ENCODE measurements at regions of chr2 and their contacts with region 1.

Region 1: GRCh38 chr2:219597552-219598307 is at the start of gene STK11IP:
- DNase-seq: peak; percentile 86 to 99
- H3K4me3 ChIP-seq: peak within 1 kb of the TSS; percentile 70 to 73
- H3K27ac ChIP-seq: peak within 1 kb of the TSS; percentile 88
- H3K4me1 ChIP-seq: peaks cover 0 to 9% of the 10 kb centered on the region in 2 donors
- H3K27me3 ChIP-seq: no peaks in the 10 kb centered on the region
- CTCF ChIP-seq: no peak
- total RNA-seq, gene STK11IP: 138 TPM

Region 2: DNA sequence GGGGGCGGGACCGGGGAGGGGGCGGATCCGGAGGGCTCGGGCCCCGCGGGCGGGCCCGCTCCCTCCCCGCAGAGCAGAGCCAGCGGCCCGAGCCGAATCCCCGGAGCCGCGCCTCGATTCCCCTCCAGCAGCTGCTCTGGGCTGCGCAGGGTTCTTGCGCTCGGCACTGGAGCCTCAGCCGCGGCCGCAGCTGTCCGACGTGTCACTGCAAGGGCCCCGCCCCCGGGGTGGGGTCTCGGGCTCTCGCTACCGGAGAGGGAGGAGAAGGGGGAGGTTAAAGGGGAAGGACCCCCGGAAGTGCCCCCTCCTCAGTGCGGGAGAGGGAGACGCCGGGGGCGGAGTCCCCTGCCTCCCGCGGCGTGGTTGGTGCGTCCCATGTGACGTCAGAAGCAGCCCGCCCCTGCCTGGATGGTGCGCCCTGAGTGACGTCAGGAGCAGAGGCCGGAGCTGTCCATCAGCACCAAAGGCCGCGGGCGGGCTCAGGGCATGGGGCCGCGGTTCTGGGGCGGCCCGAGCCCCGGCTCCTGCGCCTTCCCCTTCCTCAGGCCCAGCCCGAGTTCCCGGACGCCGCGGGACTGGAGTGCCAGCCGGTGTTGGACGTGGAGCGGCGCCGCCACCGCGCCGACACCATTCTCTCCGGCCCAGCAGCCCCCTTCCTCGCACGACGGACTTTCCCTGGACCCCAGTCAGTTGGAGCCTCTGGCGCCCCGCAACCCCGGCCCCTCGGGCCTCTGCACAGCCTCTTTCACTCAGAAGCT is 54.0 kb before region 1 on chr2 and contains the starts of genes CHPF and TMEM198:
- intact Hi-C with region 1: loop called (anchors 2 kb)
- DNase-seq: peak; percentile 96 to 99
- H3K4me3 ChIP-seq: peak within 1 kb of the TSS; percentile 87 to 90
- H3K27ac ChIP-seq: peak within 1 kb of the TSS; percentile 92 to 95
- H3K4me1 ChIP-seq: peaks cover 8 to 24% of the 10 kb centered on the region in 2 donors
- H3K27me3 ChIP-seq: no peaks in the 10 kb centered on the region
- CTCF ChIP-seq: no peak
- total RNA-seq, gene CHPF: 249 TPM
- total RNA-seq, gene TMEM198: 6.0 TPM

Region 3: GRCh38 chr2:219552382-219553167 is 45.2 kb before region 1 on chr2:
- intact Hi-C with region 1: loop called (anchors 1 kb)
- DNase-seq: peak in 1 of 2 donors; percentile 92
- H3K4me3 ChIP-seq: peak overlapping the region; percentile 61 to 79
- H3K27ac ChIP-seq: peak overlapping the region; percentile 40 to 77
- H3K4me1 ChIP-seq: peaks cover 6 to 19% of the 10 kb centered on the region in 2 donors
- H3K27me3 ChIP-seq: no peaks in the 10 kb centered on the region
- CTCF ChIP-seq: no peak

Region 4: GRCh38 chr2:219571311-219572236 is 26.2 kb before region 1 on chr2 and contains the start of gene OBSL1:
- intact Hi-C with region 1: loop called (anchors 1 kb)
- DNase-seq: peak in 1 of 2 donors; percentile 81
- H3K4me3 ChIP-seq: peak within 1 kb of the TSS; percentile 93 to 94
- H3K27ac ChIP-seq: peak within 1 kb of the TSS; percentile 89 to 90
- H3K4me1 ChIP-seq: peaks cover 0 to 12% of the 10 kb centered on the region in 2 donors
- H3K27me3 ChIP-seq: no peaks in the 10 kb centered on the region
- CTCF ChIP-seq: no peak
- total RNA-seq, gene OBSL1: 151 TPM

Region 5: DNA sequence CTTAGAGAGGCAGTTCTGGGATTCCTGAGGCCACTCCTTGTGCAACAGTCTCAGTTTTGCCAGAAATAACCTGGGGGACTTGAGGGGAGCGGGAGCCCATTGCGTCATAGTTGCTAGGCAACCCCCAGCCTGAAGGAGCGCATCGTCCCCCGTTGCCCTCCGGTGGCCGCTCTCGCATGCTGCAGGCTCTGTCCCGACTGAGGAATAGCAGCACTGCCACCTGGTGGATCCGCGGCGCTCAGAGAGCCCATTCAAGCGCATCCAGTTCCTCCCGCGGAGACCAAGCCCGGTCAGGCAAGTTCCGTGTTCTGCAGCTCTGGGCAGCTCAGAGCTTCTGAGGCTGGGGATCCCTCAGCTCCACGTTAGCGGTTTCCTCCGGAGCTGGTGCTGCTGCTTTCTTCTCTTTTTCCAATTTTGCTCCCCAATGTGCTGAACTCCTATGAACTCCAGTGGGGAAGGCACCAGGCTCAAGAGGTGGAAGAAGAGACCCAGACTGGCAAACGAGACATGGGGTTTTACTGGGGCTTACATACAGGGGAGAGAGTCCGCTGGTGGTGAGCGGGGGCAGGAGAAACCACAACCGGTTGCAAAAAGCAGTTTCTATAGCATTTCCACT is 44.8 kb after region 1 on chr2:
- intact Hi-C with region 1: loop called (anchors 1 kb)
- DNase-seq: peak; percentile 90 to 99
- H3K4me3 ChIP-seq: no peak overlapping the region
- H3K27ac ChIP-seq: no peak overlapping the region
- H3K4me1 ChIP-seq: peaks cover 0 to 12% of the 10 kb centered on the region in 2 donors
- H3K27me3 ChIP-seq: no peaks in the 10 kb centered on the region
- CTCF ChIP-seq: peak; percentile 99 to 100 (median 99)

Region 6: DNA sequence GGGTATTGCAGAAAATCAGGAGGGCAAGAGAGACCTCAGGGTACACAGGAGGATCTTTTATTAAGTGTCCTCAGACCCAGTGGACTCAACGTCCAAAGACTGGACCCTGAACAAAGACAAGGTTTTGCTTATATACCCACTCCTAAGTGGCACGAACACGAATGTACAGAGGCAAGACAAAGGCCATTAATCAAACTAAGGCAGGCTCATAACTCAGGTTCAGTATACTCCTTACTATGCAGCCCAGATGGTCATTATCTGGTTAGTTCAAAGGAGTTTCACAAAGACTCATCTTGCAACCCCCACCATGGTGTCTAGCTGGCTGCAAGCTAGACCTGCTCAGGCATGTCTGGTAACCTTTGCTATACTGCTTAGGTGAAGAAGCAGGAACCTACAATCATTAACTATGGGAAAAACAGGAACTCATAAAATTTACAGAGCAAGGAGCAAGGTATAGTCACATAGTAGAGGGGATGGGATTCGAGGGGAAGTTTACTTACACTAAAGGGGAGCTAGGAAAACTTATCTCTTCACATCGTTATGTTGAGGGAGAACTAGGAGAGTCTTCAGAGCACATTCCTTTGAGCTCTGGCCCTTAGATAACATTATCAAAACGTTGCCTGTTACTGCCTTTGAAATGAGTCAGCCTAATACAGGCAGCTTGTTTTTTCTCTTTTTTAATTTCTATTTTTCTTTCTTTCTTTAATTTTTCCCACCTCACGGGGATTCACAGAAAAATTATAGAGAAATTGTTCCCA is 63.6 kb after region 1 on chr2:
- intact Hi-C with region 1: no loop called
- DNase-seq: no peak
- H3K4me3 ChIP-seq: no peak overlapping the region
- H3K27ac ChIP-seq: no peak overlapping the region
- H3K4me1 ChIP-seq: peaks cover 0 to 4% of the 10 kb centered on the region in 2 donors
- H3K27me3 ChIP-seq: no peaks in the 10 kb centered on the region
- CTCF ChIP-seq: no peak

Region 7: DNA sequence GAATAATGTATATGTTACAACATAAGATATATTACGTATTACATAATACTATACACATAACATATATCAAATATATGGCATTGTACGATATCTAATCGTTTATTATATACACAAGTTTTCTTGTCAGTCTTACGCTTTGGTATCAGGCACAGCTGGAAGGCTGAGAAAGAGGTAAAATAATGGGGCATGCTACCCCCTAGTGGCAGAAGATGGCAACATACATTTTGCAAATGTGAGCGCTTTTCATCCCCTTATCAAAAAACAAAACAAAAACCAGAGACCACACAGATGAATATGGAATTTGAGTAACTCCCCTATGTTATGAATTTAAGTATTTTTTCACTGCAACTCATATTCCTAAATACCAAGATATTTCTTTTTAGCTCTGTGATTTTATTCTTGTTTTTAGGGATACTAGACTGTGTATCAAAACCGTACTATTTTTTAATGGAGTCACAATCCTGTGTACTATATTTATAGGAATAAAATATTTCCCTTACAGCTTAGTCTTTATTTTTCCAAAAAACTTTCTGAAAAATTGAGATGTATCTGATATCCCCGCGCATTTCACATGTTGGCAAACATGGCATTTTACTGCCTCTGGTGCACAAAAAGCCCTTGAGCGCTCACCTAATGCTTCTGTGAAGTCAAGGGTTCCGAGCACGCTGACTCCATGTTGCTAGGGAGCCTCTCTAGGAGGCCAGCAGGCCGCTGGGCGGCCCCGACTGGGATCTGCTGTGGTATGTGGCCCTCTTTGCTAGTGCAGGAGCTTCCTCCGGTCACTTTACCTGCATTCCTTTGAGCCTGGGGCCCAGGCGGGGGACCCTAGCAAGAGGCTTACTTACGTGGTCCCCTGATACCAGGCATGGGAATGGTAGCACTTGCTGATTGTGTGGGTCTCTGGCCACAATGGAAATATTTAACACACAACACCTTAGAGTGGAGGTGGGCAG is 92.2 kb after region 1 on chr2:
- intact Hi-C with region 1: loop called (anchors 2 kb)
- DNase-seq: peak in 1 of 2 donors; percentile 72
- H3K4me3 ChIP-seq: peak overlapping the region in 1 of 2 donors; percentile 52
- H3K27ac ChIP-seq: peak overlapping the region; percentile 87 to 88
- H3K4me1 ChIP-seq: peaks cover 6 to 30% of the 10 kb centered on the region in 2 donors
- H3K27me3 ChIP-seq: no peaks in the 10 kb centered on the region
- CTCF ChIP-seq: peak; percentile 60 to 74 (median 72)

Measured in ascending aorta (tissue), 2 donors.